IMR-90 (cell line): ENCODE measurements at regions of chr4 and their contacts with region 1.

Region 1: GRCh38 chr4:153221783-153222706 is 17.8 kb downstream of the TRIM2 start:
- DNase-seq: peak; percentile 87
- ATAC-seq: peak; percentile 85
- H3K4me3 ChIP-seq: peak overlapping the region; percentile 39
- H3K27ac ChIP-seq: peak overlapping the region; percentile 86
- H3K4me1 ChIP-seq: peaks cover 2% of the 10 kb centered on the region
- H3K27me3 ChIP-seq: no peaks in the 10 kb centered on the region
- CTCF ChIP-seq: no peak
- POLR2A ChIP-seq: peak; percentile 63; the same call in 1 of the 2 replicates
- RAD21 ChIP-seq: no peak

Region 2: DNA sequence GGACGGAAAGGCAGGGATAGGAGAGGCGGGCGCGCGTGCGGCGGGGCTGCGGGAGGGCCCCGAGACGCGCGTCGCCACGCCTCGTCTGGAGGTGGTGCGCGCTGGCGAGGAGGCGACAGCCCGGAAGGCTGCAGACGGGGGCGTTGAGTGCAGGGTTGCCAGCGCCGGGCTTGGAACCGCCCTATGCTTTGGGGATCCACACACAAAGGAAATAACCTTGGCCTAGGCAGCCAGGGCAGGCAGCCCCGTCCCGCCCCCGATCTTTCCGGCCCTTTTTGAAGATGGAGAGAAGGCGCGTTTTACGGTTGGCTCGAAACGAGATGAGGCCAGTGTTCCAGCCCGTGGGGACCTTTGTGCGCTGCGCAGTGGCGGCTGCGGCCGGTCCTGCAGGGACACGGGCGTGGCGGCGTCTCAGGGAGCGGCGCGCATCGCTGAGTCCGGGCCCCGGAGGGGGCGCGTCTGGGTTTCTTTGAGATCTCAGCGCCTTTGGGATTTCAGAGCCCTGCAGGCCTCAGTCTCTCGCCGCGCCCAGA is 68.6 kb before region 1 on chr4:
- CTCF ChIA-PET with region 1: no interaction called
- POLR2A ChIA-PET with region 1: no interaction called
- dilution Hi-C with region 1: no loop called
- in situ Hi-C with region 1: no loop called
- intact Hi-C with region 1: loop called (anchors 2 kb)
- DNase-seq: peak; percentile 7
- ATAC-seq: peak; percentile 80
- H3K4me3 ChIP-seq: peak overlapping the region; percentile 48
- H3K27ac ChIP-seq: peak overlapping the region; percentile 3; the same call in 1 of the 2 replicates
- H3K4me1 ChIP-seq: peaks cover 5% of the 10 kb centered on the region
- H3K27me3 ChIP-seq: peaks cover 3% of the 10 kb centered on the region
- CTCF ChIP-seq: no peak
- POLR2A ChIP-seq: no peak
- RAD21 ChIP-seq: no peak

Region 3: DNA sequence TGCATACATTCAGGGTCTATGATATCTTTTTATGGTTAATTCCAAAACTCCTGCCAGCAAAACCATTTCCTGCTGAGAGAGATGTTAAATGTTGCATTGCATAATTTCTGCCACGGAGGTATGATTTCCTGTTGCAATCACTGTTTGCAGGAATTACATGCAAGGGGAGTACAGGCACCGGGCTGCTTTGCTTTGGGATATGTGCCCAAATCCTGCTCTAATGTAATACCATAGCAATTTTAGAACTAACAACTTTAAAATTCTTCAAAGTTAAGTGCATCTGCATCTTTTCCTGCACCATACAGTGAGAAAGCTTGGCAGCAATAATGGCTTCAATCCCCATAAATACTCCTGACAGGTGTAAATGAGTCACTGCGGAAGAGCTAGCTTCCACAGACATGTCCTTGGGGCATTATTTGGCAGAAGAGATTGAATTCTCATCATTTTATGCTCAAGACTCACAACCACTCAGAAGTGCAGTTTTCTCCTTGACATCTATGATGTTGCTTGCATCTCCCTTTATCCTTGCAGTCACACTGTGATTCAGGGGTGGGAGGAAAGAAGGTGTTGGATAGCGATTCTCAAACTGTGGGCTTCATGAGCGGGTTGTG is 11.8 kb after region 1 on chr4:
- CTCF ChIA-PET with region 1: no interaction called
- POLR2A ChIA-PET with region 1: no interaction called
- dilution Hi-C with region 1: no loop called
- in situ Hi-C with region 1: no loop called
- intact Hi-C with region 1: loop called (anchors 1 kb)
- DNase-seq: peak; percentile 93
- ATAC-seq: peak; percentile 77
- H3K4me3 ChIP-seq: no peak overlapping the region
- H3K27ac ChIP-seq: peak overlapping the region; percentile 95
- H3K4me1 ChIP-seq: peaks cover 14% of the 10 kb centered on the region
- H3K27me3 ChIP-seq: no peaks in the 10 kb centered on the region
- CTCF ChIP-seq: no peak
- POLR2A ChIP-seq: no peak
- RAD21 ChIP-seq: no peak

Region 4: DNA sequence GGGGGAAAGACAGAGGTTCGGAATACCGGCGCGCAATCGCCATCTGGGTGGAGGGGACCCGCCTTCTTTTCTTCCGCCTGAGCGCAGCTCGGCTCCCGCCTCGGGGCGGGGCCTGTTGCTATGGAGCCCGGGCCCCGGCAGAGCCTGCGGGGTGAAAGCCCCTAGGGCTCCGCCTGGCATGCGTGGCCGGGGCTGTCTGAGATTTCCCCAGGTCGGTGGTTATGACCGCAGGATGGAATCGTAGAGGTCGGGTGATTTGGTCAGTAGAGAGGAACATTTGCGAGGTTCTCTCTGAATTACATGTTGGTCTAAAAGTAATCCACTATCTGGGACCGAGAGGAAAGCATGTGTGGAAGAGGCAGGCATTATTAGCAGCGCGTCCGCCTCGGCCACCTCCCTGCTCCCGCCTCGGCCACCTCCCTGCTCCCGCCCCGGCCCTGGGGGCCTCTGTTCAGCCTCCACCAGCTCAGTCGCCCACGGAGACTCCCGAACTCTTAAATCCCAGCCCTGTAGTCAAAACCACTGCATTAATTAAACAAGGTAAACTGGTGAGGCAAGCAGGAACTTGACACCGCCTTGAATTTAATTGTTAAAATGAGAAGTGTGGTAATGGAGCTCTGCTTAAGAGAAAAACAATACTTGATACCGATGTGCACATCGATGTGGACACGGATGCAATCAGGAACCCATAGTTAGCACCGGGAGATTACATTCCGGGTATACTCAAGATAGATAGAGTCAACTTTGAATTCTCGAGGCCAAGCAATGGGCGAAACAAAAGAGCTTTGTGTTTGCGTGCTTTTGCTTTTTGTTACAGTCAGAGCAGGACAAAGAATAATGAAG is 27.4 kb after region 1 on chr4:
- CTCF ChIA-PET with region 1: interaction called, 4 read pairs
- POLR2A ChIA-PET with region 1: no interaction called
- dilution Hi-C with region 1: no loop called
- in situ Hi-C with region 1: no loop called
- intact Hi-C with region 1: loop called (anchors 1 kb)
- DNase-seq: peak; percentile 60
- ATAC-seq: peak; percentile 99
- H3K4me3 ChIP-seq: peak overlapping the region; percentile 64
- H3K27ac ChIP-seq: peak overlapping the region; percentile 35
- H3K4me1 ChIP-seq: peaks cover 5% of the 10 kb centered on the region; the same call in 1 of the 2 replicates
- H3K27me3 ChIP-seq: no peaks in the 10 kb centered on the region
- CTCF ChIP-seq: no peak
- POLR2A ChIP-seq: no peak
- RAD21 ChIP-seq: no peak

Region 5: DNA sequence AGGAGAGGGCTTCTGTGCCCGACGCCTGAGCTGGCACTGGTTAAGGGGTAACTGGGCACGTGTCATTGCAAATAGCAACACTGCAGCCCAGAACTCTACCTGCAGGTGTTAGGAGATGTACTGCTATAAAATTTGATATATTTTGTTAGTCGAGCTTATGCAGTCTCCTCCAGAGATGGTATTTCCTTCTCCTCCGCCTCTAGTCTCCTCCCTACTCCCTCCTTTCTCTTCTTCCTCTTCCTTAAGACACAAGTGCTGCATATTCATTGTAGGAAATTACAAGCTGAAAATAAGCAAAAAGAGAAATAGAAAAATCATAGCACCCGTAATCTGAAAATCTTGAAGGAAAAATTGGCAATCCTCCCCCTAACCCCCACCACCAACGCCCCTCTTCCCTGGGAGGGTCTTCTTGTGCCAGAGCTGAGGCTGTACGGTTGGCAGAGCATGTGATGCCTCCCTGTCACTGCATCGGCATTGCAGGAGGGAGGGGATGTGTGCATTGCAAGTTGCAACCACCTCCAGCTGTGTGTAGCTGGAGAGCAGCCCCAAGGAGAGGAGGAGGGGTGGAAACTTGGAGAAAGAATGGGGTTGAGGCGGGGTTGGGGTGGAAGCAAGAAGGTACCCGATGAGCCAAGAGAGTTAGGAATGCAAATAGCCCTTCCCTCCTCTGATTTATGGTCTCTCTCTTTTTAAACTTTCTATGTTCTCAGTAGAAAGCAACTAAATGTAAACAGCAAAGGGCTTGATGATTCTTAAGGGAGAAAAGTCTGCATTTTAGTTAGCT is 74.2 kb after region 1 on chr4:
- CTCF ChIA-PET with region 1: no interaction called
- POLR2A ChIA-PET with region 1: no interaction called
- dilution Hi-C with region 1: no loop called
- in situ Hi-C with region 1: no loop called
- intact Hi-C with region 1: loop called (anchors 2 kb)
- DNase-seq: peak; percentile 84
- ATAC-seq: peak; percentile 97
- H3K4me3 ChIP-seq: no peak overlapping the region
- H3K27ac ChIP-seq: peak overlapping the region; percentile 56; the same call in 1 of the 2 replicates
- H3K4me1 ChIP-seq: peaks cover 20% of the 10 kb centered on the region
- H3K27me3 ChIP-seq: no peaks in the 10 kb centered on the region
- CTCF ChIP-seq: no peak
- POLR2A ChIP-seq: no peak
- RAD21 ChIP-seq: no peak

Region 6: DNA sequence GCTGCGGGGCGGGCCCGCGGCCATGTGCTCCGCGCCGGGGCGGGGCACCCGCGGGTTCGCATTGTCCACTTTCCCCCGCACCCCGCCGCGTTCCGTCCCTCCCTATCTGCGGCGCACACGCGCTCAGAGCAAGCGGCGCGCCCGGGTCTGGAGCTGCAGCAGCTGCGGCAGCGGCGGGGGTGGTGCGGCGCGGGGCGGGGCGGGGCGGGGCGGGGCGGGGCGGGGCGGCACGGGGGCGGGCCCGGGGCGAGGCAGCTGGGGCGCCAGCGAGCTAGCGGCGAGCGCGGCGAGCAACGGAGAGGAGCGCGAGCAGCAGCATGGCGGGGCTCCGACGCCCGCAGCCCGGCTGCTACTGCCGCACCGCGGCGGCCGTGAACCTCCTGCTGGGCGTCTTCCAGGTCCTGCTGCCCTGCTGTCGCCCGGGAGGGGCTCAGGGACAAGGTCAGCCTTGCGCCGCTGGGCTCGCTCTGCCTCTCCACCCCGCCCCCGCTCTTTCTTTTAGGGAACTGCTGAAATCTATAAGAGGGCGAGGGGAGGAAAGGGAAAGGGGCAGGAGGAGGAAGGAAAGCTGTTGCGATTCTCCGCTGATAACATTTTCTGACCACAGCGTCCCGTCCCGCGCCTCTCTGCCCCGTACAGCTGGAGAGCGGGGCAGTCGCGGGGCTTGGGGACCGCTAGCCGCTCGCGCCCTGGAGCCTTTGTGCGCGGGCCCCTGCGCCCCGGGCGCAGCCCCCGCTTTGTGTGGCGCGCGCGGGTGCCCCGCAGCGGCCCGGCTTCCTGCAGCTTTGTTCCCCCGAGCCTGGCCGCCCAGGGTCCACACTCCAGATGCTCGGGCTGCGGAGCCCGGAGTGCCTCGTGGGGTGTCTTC is 244.3 kb after region 1 on chr4 and contains the start of gene TMEM131L:
- CTCF ChIA-PET with region 1: no interaction called
- POLR2A ChIA-PET with region 1: no interaction called
- dilution Hi-C with region 1: no loop called
- in situ Hi-C with region 1: no loop called
- intact Hi-C with region 1: loop called (anchors 10 kb)
- DNase-seq: peak; percentile 52
- ATAC-seq: peak; percentile 90
- H3K4me3 ChIP-seq: peak within 1 kb of the TSS; percentile 96
- H3K27ac ChIP-seq: peak within 1 kb of the TSS; percentile 65
- H3K4me1 ChIP-seq: peaks cover 2% of the 10 kb centered on the region; the same call in 1 of the 2 replicates
- H3K27me3 ChIP-seq: no peaks in the 10 kb centered on the region
- CTCF ChIP-seq: no peak
- POLR2A ChIP-seq: 0 out of 2 replicates have a peak, but pooled peaks have one; percentile 33
- RAD21 ChIP-seq: no peak; the same call in 1 of the 2 replicates
- total RNA-seq, gene TMEM131L: 16.1 and 23.8 TPM in 2 replicates